Common myeloid progenitor, CD34-positive (primary cell): ENCODE measurements at regions of chr10 and their contacts with region 1.

Region 1: GRCh38 chr10:21273400-21273932 is 252.0 kb downstream of the SKIDA1 start:
- DNase-seq: peak in 2 of 3 donors; percentile 3 to 10
- H3K4me3 ChIP-seq: no peak overlapping the region
- H3K27ac ChIP-seq: no peak overlapping the region
- H3K4me1 ChIP-seq: no peaks in the 10 kb centered on the region
- H3K27me3 ChIP-seq: no peaks in the 10 kb centered on the region

Region 2: DNA sequence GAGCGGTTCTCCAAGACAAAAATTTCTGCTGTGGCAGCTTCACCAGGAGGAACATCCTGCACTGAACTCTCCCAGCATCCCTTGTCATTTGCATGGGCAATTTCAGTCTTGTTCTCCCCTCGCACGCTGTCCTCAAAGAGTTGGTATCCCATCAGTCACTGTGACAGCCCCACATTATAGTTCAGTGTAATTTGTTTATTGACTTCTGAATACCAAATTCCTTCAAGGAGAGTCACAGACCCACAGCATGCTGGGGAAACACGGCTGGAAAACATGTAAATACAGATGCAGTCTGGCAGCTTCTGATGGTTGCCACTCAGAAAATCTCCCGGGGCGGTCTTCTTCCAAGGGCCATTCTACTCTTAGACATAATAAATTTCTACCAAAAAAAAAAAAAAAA is 225.4 kb before region 1 on chr10:
- CTCF ChIA-PET with region 1: no interaction called
- POLR2A ChIA-PET with region 1: no interaction called
- DNase-seq: no peak
- H3K4me3 ChIP-seq: no peak overlapping the region
- H3K27ac ChIP-seq: no peak overlapping the region
- H3K4me1 ChIP-seq: peaks cover 0 to 7% (median 5%) of the 10 kb centered on the region in 4 experiments
- H3K27me3 ChIP-seq: no peaks in the 10 kb centered on the region

Region 3: DNA sequence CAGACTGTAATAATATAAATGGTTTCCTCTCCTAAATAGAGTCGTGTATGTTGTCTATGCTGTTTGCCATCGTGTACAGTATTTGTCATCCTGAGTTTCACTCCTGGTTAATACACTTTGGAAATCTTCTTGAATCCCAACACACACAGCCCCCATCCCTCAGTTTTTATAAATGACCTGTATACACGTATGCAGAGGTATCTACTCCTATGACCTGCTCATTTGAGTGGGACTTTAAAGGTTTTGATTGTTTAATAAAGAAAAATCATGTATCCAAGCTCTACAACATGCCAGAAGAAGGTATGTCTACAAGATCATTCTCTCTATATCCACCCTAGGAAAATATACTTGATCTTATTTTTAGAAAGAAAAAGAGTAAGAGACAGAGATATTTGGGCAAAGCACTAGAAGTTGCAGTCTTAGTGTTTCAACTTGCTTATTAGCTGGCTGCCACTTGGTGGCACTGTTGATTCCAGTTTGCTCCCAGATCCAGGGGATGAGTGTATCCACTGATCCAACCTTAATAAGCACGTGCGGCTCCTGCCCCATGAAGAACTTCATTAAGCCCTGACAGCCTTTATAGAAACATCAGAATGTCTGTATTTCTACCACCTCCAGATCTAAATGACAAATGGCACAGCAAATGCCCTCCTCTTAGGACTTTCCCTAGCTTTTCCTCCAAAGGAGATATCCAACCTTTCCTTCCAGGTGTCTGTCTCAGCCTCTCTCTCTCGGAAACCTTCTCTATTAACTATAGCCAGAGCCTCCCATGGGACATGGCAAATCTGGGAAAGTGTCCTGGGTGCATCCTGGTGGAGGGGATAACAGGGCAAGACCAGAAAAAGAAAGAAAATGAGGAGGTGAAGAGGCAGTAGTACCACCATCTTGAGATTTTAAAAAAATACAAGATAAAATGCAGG is 194.8 kb before region 1 on chr10:
- CTCF ChIA-PET with region 1: interaction called, 36 read pairs
- POLR2A ChIA-PET with region 1: no interaction called
- DNase-seq: peak; percentile 46 to 69 (median 60)
- H3K4me3 ChIP-seq: no peak overlapping the region
- H3K27ac ChIP-seq: no peak overlapping the region
- H3K4me1 ChIP-seq: no peaks in the 10 kb centered on the region
- H3K27me3 ChIP-seq: peaks cover 0 to 3% (median 0%) of the 10 kb centered on the region in 5 experiments

Region 4: GRCh38 chr10:21292763-21293517 is 19.5 kb after region 1 on chr10:
- CTCF ChIA-PET with region 1: no interaction called
- POLR2A ChIA-PET with region 1: no interaction called
- DNase-seq: peak; percentile 7 to 61 (median 52)
- H3K4me3 ChIP-seq: peak overlapping the region in 5 of 7 experiments; percentile 9 to 62 (median 40)
- H3K27ac ChIP-seq: no peak overlapping the region
- H3K4me1 ChIP-seq: peaks cover 0 to 7% (median 2%) of the 10 kb centered on the region in 4 experiments
- H3K27me3 ChIP-seq: peaks cover 0 to 7% (median 5%) of the 10 kb centered on the region in 5 experiments